Activated naive CD4-positive, alpha-beta T cell treated with anti-CD3 and anti-CD28 coated beads for 36 hours (primary cell): ENCODE measurements at regions of chr16 and their contacts with region 1.

Region 1: DNA sequence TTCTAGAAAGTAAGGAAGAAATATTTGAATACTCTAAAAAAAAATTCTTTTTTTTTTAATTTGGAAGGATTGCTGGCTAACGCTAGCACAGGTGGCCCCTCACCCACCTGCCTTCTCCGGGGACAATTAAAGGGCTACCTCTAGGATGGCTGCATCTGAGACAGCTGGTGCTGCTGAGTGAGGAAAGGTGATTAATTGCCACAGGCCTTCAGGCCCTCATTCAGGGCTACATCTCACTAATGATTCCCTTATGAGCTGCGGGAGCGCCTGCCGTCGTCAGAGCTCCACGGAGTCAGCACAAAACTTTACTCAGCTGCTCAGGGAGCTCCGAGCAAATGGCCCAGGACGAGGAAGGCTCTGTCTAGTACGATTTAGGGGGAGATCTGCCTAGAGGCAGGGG is 27.0 kb upstream of the AKTIP start:
- DNase-seq: no peak
- H3K4me3 Mint-ChIP-seq: no peak overlapping the region
- H3K27ac Mint-ChIP-seq: no peak overlapping the region
- H3K4me1 Mint-ChIP-seq: peaks cover 12% of the 10 kb centered on the region
- H3K27me3 Mint-ChIP-seq: no peaks in the 10 kb centered on the region

Region 2: DNA sequence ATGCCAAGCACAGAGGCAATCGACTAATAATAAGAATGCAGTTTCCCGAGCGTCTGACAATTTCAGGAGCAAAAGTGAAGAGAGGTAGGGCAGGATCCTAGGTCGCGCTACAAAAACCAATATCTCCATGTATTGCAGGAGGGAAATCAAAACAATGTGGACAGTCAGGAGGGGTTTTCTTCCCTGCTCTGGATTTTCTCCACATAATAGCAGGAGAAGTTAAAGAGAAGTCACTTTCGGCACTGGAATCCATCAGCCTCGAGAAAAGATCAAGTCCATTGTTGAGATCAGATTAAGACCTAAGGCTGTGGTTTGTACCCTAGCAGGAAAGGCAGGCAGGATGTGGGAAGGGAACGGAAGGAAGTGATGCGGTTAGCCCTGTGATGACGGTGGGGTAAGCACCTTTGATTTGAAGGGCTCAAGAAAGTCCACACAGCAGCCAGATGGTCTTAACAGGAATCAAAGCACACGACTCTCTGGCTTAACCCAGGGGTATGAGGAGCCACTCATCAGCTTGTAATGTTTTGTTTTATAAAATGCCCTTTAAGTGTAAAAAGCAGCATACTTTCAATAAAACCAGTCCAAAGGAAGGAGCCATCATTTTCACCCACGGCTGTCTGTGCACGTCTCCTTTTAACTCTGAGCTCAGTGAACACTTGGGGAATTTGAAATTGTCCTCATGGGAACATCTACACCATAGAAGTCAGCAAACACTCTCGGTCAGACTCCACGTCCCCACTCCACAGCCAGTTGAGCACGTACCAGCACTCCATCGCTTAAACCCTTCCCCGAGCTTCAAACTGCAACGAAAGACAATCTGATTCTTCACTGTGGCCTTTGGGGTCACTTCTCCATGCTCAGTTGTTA is 11.3 kb before region 1 on chr16:
- CTCF ChIA-PET with region 1: interaction called, 6 read pairs
- intact Hi-C with region 1: loop called (anchors 1 kb)
- DNase-seq: peak; percentile 92
- H3K4me3 Mint-ChIP-seq: peak overlapping the region; percentile 64
- H3K27ac Mint-ChIP-seq: peak overlapping the region; percentile 90
- H3K4me1 Mint-ChIP-seq: peaks cover 36% of the 10 kb centered on the region
- H3K27me3 Mint-ChIP-seq: no peaks in the 10 kb centered on the region

Region 3: GRCh38 chr16:53583401-53583800 is 53.4 kb after region 1 on chr16:
- CTCF ChIA-PET with region 1: no interaction called
- intact Hi-C with region 1: no loop called
- DNase-seq: no peak
- H3K4me3 Mint-ChIP-seq: no peak overlapping the region
- H3K27ac Mint-ChIP-seq: no peak overlapping the region
- H3K4me1 Mint-ChIP-seq: no peaks in the 10 kb centered on the region
- H3K27me3 Mint-ChIP-seq: peaks cover 2% of the 10 kb centered on the region

Region 4: DNA sequence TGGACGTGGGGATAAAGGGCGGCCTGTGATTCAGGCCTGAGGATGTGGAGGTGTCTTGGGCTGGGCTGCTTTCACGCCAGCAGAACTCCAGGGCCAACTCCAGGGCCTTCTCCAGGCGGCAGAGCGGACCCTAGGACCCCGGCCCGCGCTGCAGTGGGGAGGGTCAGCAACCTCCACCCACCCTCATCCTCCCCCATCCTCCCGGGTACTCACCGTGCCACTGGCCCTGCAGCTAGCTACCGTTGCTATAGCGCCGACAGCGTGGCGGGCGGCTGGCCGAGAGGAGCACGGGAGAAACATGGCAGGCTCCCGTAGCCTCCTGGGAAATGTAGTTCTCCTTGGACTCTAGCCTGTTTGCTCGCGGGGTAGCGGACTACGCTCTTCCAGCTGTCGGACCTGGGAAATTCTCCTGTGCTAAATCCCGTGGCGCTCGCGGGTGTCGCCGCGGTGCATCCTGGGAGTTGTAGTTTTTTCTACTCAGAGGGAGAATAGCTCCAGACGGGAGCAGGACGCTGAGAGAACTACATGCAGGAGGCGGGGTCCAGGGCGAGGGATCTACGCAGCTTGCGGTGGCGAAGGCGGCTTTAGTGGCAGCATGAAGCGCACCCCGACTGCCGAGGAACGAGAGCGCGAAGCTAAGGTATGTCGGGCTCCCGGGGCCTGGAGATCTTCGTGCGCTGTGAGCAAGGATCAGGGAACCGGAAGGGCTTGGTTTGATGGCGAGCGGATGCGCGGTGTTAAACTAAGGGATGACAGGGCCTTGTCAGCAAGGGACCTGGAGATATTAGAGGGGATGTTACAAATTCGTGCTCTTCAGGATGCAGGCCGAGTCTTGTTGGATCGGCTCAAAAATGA is 173.8 kb after region 1 on chr16 and contains the starts of genes FTO and RPGRIP1L:
- CTCF ChIA-PET with region 1: no interaction called
- intact Hi-C with region 1: loop called (anchors 1 kb)
- DNase-seq: peak; percentile 99
- H3K4me3 Mint-ChIP-seq: peak within 1 kb of the TSS; percentile 100
- H3K27ac Mint-ChIP-seq: peak within 1 kb of the TSS; percentile 89
- H3K4me1 Mint-ChIP-seq: peaks cover 30% of the 10 kb centered on the region
- H3K27me3 Mint-ChIP-seq: no peaks in the 10 kb centered on the region
- total RNA-seq, gene FTO: 60.2 to 63.9 TPM
- total RNA-seq, gene RPGRIP1L: 4.3 to 5.2 TPM

Region 5: DNA sequence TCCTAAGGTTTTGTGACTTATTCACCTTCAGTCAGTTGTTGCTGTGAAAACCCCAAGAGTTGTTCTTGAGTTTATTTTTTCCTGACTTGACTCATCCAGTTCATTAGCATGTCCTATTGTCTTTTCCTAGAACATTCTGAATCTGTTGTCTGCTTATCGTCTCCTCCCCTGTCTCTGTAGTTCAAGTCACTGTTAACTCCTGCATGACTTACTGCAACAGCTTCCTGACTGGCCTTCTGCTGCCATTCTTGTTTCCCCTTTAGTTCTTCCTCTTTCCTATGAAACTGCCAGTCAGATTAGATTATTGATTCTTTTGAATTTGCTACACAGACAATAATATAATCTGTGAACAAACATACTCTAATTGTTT is 335.4 kb after region 1 on chr16:
- CTCF ChIA-PET with region 1: no interaction called
- intact Hi-C with region 1: loop called (anchors 1 kb)
- DNase-seq: no peak
- H3K4me3 Mint-ChIP-seq: no peak overlapping the region
- H3K27ac Mint-ChIP-seq: peak overlapping the region; percentile 27
- H3K4me1 Mint-ChIP-seq: peaks cover 11% of the 10 kb centered on the region
- H3K27me3 Mint-ChIP-seq: no peaks in the 10 kb centered on the region